Caco-2 (cell line): ENCODE measurements at regions of chr10 and their contacts with region 1.

Region 1: DNA sequence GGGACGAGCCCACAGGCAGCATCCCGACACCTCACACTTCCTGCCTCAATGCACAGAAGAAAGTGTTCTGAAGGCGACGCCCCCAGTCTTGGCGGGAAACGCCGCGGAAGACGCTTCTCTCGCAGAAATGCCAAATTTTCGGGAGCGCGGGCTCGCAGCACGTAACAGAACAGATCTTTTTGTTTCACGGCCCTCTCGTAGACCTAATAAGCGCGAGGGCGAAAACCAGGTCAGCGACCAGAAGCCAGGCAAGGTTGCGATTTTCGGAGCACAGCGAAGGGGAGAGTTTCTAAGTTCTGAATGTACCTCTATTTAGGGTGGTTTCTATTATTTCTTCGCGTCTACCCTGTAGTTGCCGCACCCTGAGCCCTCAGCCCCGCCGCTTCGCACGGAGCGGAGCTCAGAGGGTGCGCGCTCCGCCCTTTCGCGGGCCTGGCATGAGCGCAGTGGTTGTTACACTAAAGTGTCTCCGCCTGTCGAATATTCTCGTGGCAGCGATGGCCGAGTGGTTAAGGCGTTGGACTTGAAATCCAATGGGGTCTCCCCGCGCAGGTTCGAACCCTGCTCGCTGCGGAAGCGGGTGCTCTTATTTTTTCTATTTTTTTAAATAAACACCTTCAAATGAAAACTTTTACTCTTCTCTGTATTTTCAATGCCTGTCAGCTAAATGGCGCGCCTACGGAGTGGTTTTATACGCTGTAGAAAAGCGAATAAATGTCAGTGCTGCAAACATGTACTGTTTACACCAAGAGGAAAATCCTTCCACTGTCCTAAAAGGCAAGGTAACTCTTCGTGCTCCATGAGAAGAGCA is 68.2 kb upstream of the CTNNA3 start:
- DNase-seq: peak; percentile 98 to 99
- H3K4me3 ChIP-seq: peak overlapping the region; percentile 81
- H3K4me3 Mint-ChIP-seq: peak overlapping the region; percentile 93
- H3K27ac Mint-ChIP-seq: peak overlapping the region; percentile 95
- H3K4me1 ChIP-seq: 0 out of 2 replicates have a peak, but pooled peaks cover 8% of the 10 kb centered on the region
- H3K4me1 Mint-ChIP-seq: peaks cover 25% of the 10 kb centered on the region
- H3K27me3 ChIP-seq: no peaks in the 10 kb centered on the region
- H3K27me3 Mint-ChIP-seq: peaks cover under 1% of the 10 kb centered on the region
- CTCF ChIP-seq: no peak

Region 2: DNA sequence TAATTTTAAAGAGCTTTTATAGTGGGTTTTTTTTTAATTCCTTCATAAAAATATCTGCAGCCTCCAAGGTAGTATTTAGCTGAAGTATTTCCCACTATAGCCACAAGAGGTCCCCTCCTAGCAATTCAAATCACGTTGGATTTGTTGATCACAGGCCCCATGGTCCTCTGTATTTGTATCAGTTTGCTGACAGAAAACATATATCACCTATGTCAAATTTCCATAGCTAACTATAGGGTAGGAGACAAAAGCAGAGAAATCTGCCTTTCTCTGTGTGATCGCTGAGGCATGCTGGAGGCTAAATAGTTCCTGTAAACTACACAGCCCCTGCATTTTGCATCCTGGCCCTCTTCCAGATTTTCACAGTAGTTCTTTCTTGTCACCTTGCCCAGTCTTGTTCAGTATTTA is 66.5 kb before region 1 on chr10:
- CTCF ChIA-PET with region 1: interaction called, 7 read pairs
- POLR2A ChIA-PET with region 1: no interaction called
- intact Hi-C with region 1: loop called (anchors 1 kb)
- DNase-seq: peak in 1 of 2 experiments; percentile 61
- H3K4me3 ChIP-seq: no peak overlapping the region
- H3K4me3 Mint-ChIP-seq: no peak overlapping the region
- H3K27ac Mint-ChIP-seq: no peak overlapping the region
- H3K4me1 ChIP-seq: no peaks in the 10 kb centered on the region
- H3K4me1 Mint-ChIP-seq: no peaks in the 10 kb centered on the region
- H3K27me3 ChIP-seq: peaks cover 2% of the 10 kb centered on the region; the same call in 1 of the 2 replicates
- H3K27me3 Mint-ChIP-seq: peaks cover 25% of the 10 kb centered on the region
- CTCF ChIP-seq: peak; percentile 90 to 92

Region 3: DNA sequence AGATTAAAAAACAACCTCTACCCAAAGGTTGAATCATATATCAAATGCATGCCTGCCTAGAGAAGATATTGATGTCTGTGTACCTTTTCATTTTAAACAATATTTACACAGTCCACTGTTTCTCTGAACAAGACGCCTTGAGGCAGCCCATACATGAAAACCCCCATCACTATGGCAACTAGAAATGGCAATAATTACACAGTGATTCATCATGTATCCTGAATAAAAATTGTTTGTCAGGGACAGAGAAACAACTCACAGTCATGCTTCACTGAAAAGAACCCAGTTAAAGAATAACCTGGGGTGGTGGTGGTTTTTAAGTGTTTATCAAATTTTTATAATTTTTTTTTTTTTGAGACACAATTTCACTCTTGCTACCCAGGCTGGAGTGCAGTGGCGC is 54.1 kb after region 1 on chr10:
- CTCF ChIA-PET with region 1: no interaction called
- POLR2A ChIA-PET with region 1: no interaction called
- intact Hi-C with region 1: no loop called
- DNase-seq: peak in 1 of 2 experiments; percentile 67
- H3K4me3 ChIP-seq: no peak overlapping the region
- H3K4me3 Mint-ChIP-seq: no peak overlapping the region
- H3K27ac Mint-ChIP-seq: no peak overlapping the region
- H3K4me1 ChIP-seq: peaks cover 7% of the 10 kb centered on the region
- H3K4me1 Mint-ChIP-seq: peaks cover 6% of the 10 kb centered on the region
- H3K27me3 ChIP-seq: no peaks in the 10 kb centered on the region
- H3K27me3 Mint-ChIP-seq: no peaks in the 10 kb centered on the region
- CTCF ChIP-seq: no peak

Region 4: DNA sequence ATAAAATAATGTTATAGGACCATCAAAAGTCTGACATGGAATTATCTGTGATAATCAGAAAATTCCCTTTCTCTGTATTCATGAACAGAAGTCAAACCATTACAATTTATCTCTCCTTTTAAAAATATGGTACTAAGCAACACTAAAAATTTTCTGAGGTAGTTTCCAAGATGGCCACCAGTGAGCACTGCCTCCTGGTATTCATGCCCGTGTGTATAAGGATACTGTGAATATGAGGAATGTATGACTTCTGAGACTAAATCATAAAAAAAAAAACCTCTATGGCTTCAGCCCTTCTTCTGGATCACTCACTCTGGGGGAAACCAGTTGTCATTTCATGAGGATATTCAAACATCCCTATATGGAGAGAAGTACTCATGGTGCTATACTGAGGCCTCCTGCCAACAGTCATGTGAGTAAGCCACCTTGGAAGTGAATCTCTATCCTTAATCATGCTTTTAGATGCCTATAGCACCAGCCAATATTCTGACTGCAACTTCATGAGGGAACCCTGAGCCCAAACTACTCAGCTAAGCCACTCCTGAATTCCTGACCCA is 161.3 kb after region 1 on chr10:
- CTCF ChIA-PET with region 1: no interaction called
- POLR2A ChIA-PET with region 1: no interaction called
- intact Hi-C with region 1: no loop called
- DNase-seq: no peak
- H3K4me3 ChIP-seq: no peak overlapping the region
- H3K4me3 Mint-ChIP-seq: no peak overlapping the region
- H3K27ac Mint-ChIP-seq: no peak overlapping the region
- H3K4me1 ChIP-seq: no peaks in the 10 kb centered on the region
- H3K4me1 Mint-ChIP-seq: no peaks in the 10 kb centered on the region
- H3K27me3 ChIP-seq: no peaks in the 10 kb centered on the region
- H3K27me3 Mint-ChIP-seq: no peaks in the 10 kb centered on the region
- CTCF ChIP-seq: no peak